ENCODE measurements at regions of chr22 and their contacts with region 1.

Region 1: DNA sequence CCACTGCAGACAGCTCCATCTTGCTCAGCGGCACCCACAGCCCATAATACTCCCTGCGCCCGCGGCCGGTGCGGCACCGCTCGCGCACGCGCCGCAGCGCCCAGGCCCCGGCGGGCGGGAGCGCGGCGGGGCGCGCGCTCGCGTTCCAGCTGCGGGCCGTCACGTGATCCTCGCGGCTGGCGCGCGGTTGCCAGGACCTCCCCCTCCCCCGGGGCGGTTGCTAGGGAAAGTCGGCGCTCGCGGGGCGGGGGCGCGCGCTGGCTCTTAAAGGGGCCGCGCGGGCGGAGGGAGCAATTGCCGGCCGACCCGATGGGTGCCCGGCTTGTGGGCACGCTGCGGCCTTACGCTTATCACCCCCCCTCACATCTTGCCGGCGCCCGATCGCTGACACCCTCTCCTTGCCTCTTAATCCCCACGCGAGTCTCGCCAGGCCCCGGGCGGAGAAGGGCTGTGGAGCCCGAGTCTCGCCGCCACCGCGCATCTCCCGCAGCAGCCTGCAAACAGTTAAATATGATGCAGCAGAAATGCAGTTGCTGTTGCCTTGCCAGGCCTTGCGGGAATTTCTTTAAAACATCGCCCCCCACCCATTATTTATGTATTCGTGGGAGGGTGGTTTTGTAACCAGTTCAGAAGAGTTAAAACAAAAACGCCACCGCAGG is at the start of gene CBX6:
- DNase-seq: peak; percentile 78
- ATAC-seq: peak; percentile 76
- H3K4me3 ChIP-seq: peak within 1 kb of the TSS; percentile 61 to 86
- H3K27ac ChIP-seq: peak within 1 kb of the TSS; percentile 84
- H3K4me1 ChIP-seq: peaks cover 11 to 45% of the 10 kb centered on the region in 2 experiments
- H3K27me3 ChIP-seq: no peaks in the 10 kb centered on the region
- CTCF ChIP-seq: no peak
- POLR2A ChIP-seq: no peak
- RAD21 ChIP-seq: no peak
- total RNA-seq, gene CBX6: 90.0 TPM

Region 2: DNA sequence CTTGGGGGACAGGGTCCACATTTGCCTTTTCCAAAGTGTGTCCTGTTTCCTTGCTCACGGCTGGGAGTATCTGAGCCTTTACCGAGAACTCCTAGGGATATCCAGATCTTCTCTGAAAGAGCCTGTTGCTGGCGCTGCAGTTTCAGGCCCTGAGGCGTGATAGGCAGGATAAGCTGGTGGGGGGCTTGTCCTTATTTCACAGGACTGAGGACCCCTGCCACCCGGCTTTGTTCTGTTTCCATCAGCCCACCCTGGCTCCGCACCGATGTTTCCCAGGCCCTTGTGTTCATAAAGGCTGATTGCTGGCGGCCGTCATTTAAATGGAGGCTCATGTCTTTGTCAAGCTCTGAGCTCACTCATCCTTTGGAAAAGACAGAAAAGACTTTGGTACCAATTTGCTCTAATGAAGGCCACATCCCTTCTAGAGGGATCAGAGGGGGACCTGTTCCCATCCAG is 19.1 kb before region 1 on chr22:
- CTCF ChIA-PET with region 1: interaction called, 20 read pairs
- POLR2A ChIA-PET with region 1: interaction called, 4 read pairs
- RAD21 ChIA-PET with region 1: no interaction called
- intact Hi-C with region 1: no loop called
- DNase-seq: no peak
- ATAC-seq: no peak
- H3K4me3 ChIP-seq: no peak overlapping the region
- H3K27ac ChIP-seq: no peak overlapping the region
- H3K4me1 ChIP-seq: peaks cover 15 to 26% of the 10 kb centered on the region in 2 experiments
- H3K27me3 ChIP-seq: no peaks in the 10 kb centered on the region
- CTCF ChIP-seq: no peak
- POLR2A ChIP-seq: no peak
- RAD21 ChIP-seq: no peak

Region 3: GRCh38 chr22:38927033-38927781 is 54.9 kb after region 1 on chr22:
- CTCF ChIA-PET with region 1: interaction called, 11 read pairs
- POLR2A ChIA-PET with region 1: interaction called, 3 read pairs
- RAD21 ChIA-PET with region 1: interaction called, 3 to 4 read pairs
- intact Hi-C with region 1: loop called (anchors 1 kb)
- DNase-seq: peak; percentile 74
- ATAC-seq: peak; percentile 75
- H3K4me3 ChIP-seq: peak overlapping the region; percentile 29 to 46
- H3K27ac ChIP-seq: peak overlapping the region; percentile 48
- H3K4me1 ChIP-seq: peaks cover 41 to 53% of the 10 kb centered on the region in 2 experiments
- H3K27me3 ChIP-seq: no peaks in the 10 kb centered on the region
- CTCF ChIP-seq: peak; percentile 77 to 90 (median 85)
- POLR2A ChIP-seq: no peak
- RAD21 ChIP-seq: peak; percentile 66

Region 4: DNA sequence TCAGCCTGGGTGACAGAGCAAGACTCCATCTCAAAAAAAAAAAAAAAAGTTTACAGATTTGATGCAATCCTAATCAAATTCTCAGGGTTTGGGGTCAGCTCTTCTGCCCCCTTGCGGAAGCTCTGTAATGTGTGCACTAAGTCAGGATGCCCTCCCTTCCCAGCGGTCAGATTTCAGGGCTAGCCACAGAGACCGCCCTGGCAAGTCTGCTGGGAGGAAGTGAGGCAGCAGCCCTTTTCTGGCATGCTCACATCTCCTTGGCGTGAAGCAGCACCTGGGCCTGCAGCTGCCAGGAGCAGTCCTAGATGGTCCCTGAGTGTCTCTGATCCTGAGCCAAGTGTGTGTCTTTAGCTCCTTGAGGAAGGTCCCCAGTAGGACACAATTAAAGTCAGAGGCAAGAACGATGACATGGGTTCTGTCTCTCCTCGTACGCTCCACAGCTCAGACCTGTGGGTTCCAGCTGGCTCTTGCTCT is 130.9 kb after region 1 on chr22:
- CTCF ChIA-PET with region 1: interaction called, 58 read pairs
- POLR2A ChIA-PET with region 1: interaction called, 5 read pairs
- RAD21 ChIA-PET with region 1: interaction called, 5 to 9 read pairs
- intact Hi-C with region 1: loop called (anchors 1 kb)
- DNase-seq: peak; percentile 80
- ATAC-seq: peak; percentile 97
- H3K4me3 ChIP-seq: no peak overlapping the region
- H3K27ac ChIP-seq: peak overlapping the region; percentile 3; the same call in 1 of the 2 replicates
- H3K4me1 ChIP-seq: peaks cover 7 to 13% of the 10 kb centered on the region in 2 experiments; a peak in 3 of 4 replicates
- H3K27me3 ChIP-seq: no peaks in the 10 kb centered on the region
- CTCF ChIP-seq: peak; percentile 72 to 92 (median 75)
- POLR2A ChIP-seq: no peak
- RAD21 ChIP-seq: peak; percentile 86

Region 5: DNA sequence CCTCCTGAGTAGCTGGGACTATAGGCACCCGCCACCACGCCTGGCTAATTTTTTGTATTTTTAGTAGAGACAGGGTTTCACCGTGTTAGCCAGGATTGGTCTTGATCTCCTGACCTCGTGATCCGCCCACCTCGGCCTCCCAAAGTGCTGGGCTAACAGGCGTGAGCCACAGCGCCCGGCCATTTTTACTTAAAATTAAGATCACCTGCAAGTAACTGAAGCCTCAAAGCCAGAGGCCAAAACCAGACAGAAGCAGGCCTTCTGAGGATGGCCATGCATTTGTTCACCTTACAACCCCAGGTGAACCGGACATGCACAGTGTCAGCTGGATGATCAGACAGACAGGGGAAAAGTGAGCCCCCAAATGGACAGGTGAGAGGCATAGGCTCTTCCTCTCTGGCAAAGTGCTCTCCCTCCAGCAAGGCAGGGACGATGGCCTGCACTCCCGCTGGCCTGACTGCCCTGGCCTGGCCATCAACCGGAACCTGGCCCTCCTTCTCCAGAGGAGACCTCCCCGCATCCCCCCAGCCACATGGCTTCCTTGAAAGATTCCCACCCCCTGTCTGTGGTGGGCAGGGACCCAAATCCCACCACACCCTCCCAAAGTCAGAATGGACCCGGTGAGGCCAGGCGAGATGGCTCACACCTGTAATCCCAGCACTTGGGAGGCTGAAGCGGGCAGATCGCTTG is 250.6 kb after region 1 on chr22:
- CTCF ChIA-PET with region 1: interaction called, 9 read pairs
- POLR2A ChIA-PET with region 1: no interaction called
- RAD21 ChIA-PET with region 1: no interaction called
- intact Hi-C with region 1: loop called (anchors 1 kb)
- DNase-seq: no peak
- ATAC-seq: no peak
- H3K4me3 ChIP-seq: no peak overlapping the region
- H3K27ac ChIP-seq: no peak overlapping the region
- H3K4me1 ChIP-seq: no peaks in the 10 kb centered on the region
- H3K27me3 ChIP-seq: no peaks in the 10 kb centered on the region
- CTCF ChIP-seq: no peak
- POLR2A ChIP-seq: no peak
- RAD21 ChIP-seq: no peak

Measured in HCT116 (cell line).